Endothelial cell of umbilical vein (primary cell): ENCODE measurements at regions of chr12 and their contacts with region 1.

Region 1: DNA sequence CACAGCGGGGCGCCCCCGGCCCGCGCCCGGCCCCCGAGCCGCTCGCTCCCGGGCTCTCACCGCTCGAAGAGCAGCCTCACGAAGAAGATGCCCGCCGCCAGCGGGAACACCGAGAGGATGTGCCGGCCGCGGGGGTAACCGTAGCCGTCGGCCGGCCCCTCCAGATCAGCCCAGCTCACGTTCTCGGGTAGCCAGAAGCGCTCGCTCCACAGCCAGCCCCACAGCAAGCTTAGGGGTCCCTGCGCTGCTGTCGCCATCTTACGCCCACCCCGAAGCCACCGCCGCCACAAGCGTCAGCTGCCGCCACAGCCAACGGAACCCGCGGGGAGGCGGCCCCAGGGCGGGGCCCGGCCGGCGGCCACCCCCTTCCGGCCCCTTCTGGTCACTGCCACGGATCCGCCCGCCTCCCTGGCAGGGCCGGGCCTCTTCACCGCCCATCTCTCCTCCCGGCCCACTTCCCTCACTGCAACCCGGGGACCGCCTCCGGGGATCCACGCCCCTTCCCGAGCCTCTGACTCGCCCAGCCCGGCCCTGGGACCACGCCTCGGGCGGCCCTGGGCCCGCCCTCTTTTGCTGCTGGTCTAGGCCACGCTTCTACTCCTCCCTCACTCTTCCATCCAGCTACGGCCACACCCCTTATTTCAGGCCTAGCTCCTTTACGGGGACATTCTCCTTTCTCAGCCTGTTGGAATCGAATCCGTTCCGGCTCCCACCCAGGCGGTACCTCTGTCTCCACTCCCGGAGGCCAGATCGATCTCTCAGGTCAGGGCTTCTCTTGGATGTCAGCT is at the start of gene CERS5:
- DNase-seq: peak; percentile 99
- H3K4me3 ChIP-seq: peak within 1 kb of the TSS; percentile 92 to 98 (median 93)
- H3K27ac ChIP-seq: peak within 1 kb of the TSS; percentile 75
- H3K4me1 ChIP-seq: peaks cover 7% of the 10 kb centered on the region
- H3K27me3 ChIP-seq: no peaks in the 10 kb centered on the region
- CTCF ChIP-seq: no peak
- POLR2A ChIP-seq: peak; percentile 91
- total RNA-seq, gene CERS5: 60.4 and 66.4 TPM in 2 replicates

Region 2: GRCh38 chr12:49868952-49869815 is 298.1 kb before region 1 on chr12:
- CTCF ChIA-PET with region 1: no interaction called
- POLR2A ChIA-PET with region 1: no interaction called
- dilution Hi-C with region 1: no loop called
- intact Hi-C with region 1: no loop called
- DNase-seq: peak; percentile 100
- H3K4me3 ChIP-seq: no peak overlapping the region
- H3K27ac ChIP-seq: no peak overlapping the region
- H3K4me1 ChIP-seq: peaks cover 20% of the 10 kb centered on the region
- H3K27me3 ChIP-seq: peaks cover 0 to 8% of the 10 kb centered on the region in 2 experiments
- CTCF ChIP-seq: no peak
- POLR2A ChIP-seq: peak; percentile 67

Region 3: GRCh38 chr12:50084775-50085614 is 82.2 kb before region 1 on chr12 and contains the start of gene SMARCD1:
- CTCF ChIA-PET with region 1: interaction called, 10 read pairs
- POLR2A ChIA-PET with region 1: interaction called, 8 read pairs
- dilution Hi-C with region 1: no loop called
- intact Hi-C with region 1: no loop called
- DNase-seq: peak; percentile 92
- H3K4me3 ChIP-seq: peak within 1 kb of the TSS; percentile 51 to 95 (median 80)
- H3K27ac ChIP-seq: peak within 1 kb of the TSS; percentile 72
- H3K4me1 ChIP-seq: peaks cover 35% of the 10 kb centered on the region
- H3K27me3 ChIP-seq: no peaks in the 10 kb centered on the region
- CTCF ChIP-seq: peak; percentile 50 to 71
- POLR2A ChIP-seq: no peak
- total RNA-seq, gene SMARCD1: 86.6 and 101 TPM in 2 replicates

Region 4: GRCh38 chr12:50151047-50151687 is 16.1 kb before region 1 on chr12:
- CTCF ChIA-PET with region 1: interaction called, 12 read pairs
- POLR2A ChIA-PET with region 1: no interaction called
- dilution Hi-C with region 1: no loop called
- intact Hi-C with region 1: no loop called
- DNase-seq: no peak
- H3K4me3 ChIP-seq: no peak overlapping the region
- H3K27ac ChIP-seq: no peak overlapping the region
- H3K4me1 ChIP-seq: no peaks in the 10 kb centered on the region
- H3K27me3 ChIP-seq: no peaks in the 10 kb centered on the region
- CTCF ChIP-seq: no peak
- POLR2A ChIP-seq: no peak